Activated T-helper 2 cell treated with anti-CD3 and anti-CD28 coated beads, Interferon-gamma antibody, Interleukin-2, Interleukin-4, amounts not matched to agents 10 μg/mL and 5 μg/mL and 100 μg/mL, durations not matched to agents 14 hours and 24 hours and 36 hours (primary cell): ENCODE measurements at regions of chr4 and their contacts with region 1.

Region 1: DNA sequence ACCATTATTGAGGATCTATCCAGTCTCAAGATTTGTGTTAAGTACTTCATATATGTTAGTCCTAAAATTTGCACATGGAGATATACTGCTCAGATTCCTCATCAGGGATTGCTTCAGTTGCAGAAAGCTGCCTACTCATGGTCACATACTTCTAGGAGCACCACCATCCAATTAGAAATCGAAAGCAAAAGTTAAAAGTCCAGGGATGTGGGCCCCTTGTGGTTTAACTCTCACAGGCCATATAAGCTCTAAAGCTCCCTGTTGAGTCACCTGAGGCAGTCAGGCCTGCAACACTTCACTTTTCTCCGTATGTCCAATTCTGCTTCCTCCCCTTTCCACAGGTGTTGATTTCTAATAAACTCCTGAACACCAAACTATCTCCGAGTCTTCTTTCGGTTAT is 84.2 kb downstream of the CNOT6L start:
- DNase-seq: peak; percentile 50
- H3K4me3 Mint-ChIP-seq: peak overlapping the region; percentile 62
- H3K27ac Mint-ChIP-seq: peak overlapping the region; percentile 70
- H3K4me1 Mint-ChIP-seq: peaks cover 43% of the 10 kb centered on the region
- H3K27me3 Mint-ChIP-seq: no peaks in the 10 kb centered on the region

Region 2: DNA sequence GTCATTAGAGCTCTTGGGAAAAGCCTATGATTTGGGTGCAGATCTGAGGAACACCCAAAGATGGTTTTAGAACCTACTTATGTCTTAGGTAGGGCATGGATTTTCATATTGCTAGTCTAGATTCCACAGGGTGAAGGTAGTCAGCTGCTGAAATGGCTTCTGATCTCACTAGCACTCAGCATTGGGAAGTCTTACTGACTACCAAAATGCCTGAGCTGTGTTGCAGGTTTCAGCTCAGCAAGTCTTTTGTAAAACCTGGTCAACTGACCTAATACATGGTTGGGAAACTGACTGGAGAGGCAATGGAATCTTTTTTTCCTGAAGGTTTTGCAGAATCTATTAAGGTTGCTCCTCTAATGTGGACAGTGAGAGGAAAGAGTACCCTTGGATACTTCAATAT is 441.5 kb before region 1 on chr4:
- intact Hi-C with region 1: no loop called
- DNase-seq: no peak
- H3K4me3 Mint-ChIP-seq: no peak overlapping the region
- H3K27ac Mint-ChIP-seq: no peak overlapping the region
- H3K4me1 Mint-ChIP-seq: no peaks in the 10 kb centered on the region
- H3K27me3 Mint-ChIP-seq: peaks cover 6% of the 10 kb centered on the region

Region 3: GRCh38 chr4:77800483-77801259 is 65.7 kb after region 1 on chr4:
- intact Hi-C with region 1: loop called (anchors 5 kb)
- DNase-seq: no peak
- H3K4me3 Mint-ChIP-seq: peak overlapping the region; percentile 70
- H3K27ac Mint-ChIP-seq: peak overlapping the region; percentile 89
- H3K4me1 Mint-ChIP-seq: peaks cover 32% of the 10 kb centered on the region
- H3K27me3 Mint-ChIP-seq: no peaks in the 10 kb centered on the region

Region 4: DNA sequence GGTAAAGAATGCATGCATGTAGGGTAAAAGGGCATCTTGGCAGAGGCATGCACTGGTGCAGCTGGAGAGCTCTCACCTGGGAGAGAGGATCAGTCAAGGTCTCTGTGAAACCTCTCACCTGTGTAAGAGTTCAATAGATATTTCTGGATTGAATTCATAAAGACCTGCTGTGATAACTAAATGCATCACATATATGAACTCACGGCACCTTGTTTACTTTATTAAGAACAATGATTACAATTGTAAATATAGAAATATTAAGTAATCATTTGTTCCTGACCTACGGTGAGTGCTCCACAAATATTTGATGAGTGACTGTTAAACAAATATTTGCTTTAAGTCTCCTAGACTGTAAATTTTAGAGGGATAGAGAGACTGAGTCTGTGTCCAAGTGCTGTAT is 1290.2 kb after region 1 on chr4:
- intact Hi-C with region 1: no loop called
- DNase-seq: no peak
- H3K4me3 Mint-ChIP-seq: no peak overlapping the region
- H3K27ac Mint-ChIP-seq: no peak overlapping the region
- H3K4me1 Mint-ChIP-seq: no peaks in the 10 kb centered on the region
- H3K27me3 Mint-ChIP-seq: no peaks in the 10 kb centered on the region